Tibial artery (tissue), 4 donors: ENCODE measurements at regions of chr12 and their contacts with region 1.

Region 1: DNA sequence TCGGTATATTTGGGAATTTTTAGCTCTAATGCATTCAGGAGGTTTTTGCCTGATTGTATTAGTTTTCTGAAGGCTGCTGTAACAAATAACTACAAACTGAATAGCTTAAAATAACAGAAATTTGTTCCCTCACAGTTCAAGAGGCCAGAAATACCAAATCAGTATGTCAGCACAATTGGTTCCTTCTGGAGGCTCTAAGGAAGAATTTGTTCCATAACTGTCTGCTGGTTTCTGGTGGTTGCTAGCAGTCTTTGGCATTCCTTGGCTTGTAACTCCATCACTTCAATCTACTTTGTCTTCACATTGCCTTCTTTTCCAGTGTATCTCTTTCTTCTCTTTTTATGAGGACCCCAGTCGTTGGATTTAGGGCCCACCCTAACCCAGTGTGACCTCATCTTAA is 21.3 kb downstream of the TMTC3 start:
- DNase-seq: no peak
- H3K4me3 ChIP-seq: no peak overlapping the region
- H3K27ac ChIP-seq: no peak overlapping the region
- H3K4me1 ChIP-seq: no peaks in the 10 kb centered on the region
- H3K27me3 ChIP-seq: no peaks in the 10 kb centered on the region
- CTCF ChIP-seq: no peak

Region 2: GRCh38 chr12:88108021-88108420 is 55.4 kb before region 1 on chr12:
- intact Hi-C with region 1: loop called (anchors 10 kb)
- DNase-seq: no peak
- H3K4me3 ChIP-seq: no peak overlapping the region
- H3K27ac ChIP-seq: no peak overlapping the region
- H3K4me1 ChIP-seq: no peaks in the 10 kb centered on the region
- H3K27me3 ChIP-seq: no peaks in the 10 kb centered on the region
- CTCF ChIP-seq: no peak